Motor neuron (in vitro differentiated cells): ENCODE measurements at regions of chr4 and their contacts with region 1.

Region 1: DNA sequence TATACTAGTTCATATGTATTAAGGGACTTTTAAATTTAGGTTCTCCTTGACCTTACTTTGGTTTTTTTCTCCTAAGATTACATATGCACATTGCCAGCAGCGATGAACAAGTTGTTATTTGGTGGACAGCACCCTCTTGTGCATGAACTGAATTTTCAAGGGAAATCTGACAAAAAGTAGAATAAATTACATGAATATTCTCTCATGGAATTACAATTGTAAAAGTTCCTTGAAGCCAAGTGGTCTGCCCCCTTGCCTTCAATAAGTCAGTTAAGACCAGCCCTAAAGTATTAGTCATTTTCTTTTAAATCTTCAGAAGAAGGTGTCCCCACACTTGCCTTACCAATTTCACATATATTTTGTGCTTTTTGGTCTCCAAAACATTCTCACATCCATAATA is 30.7 kb upstream of the SMARCA5 start:
- ATAC-seq: peak in 3 of 8 experiments; percentile 64 to 82 (median 72)
- H3K4me3 ChIP-seq: no peak overlapping the region
- H3K27ac ChIP-seq: no peak overlapping the region
- H3K4me1 ChIP-seq: no peaks in the 10 kb centered on the region

Region 2: DNA sequence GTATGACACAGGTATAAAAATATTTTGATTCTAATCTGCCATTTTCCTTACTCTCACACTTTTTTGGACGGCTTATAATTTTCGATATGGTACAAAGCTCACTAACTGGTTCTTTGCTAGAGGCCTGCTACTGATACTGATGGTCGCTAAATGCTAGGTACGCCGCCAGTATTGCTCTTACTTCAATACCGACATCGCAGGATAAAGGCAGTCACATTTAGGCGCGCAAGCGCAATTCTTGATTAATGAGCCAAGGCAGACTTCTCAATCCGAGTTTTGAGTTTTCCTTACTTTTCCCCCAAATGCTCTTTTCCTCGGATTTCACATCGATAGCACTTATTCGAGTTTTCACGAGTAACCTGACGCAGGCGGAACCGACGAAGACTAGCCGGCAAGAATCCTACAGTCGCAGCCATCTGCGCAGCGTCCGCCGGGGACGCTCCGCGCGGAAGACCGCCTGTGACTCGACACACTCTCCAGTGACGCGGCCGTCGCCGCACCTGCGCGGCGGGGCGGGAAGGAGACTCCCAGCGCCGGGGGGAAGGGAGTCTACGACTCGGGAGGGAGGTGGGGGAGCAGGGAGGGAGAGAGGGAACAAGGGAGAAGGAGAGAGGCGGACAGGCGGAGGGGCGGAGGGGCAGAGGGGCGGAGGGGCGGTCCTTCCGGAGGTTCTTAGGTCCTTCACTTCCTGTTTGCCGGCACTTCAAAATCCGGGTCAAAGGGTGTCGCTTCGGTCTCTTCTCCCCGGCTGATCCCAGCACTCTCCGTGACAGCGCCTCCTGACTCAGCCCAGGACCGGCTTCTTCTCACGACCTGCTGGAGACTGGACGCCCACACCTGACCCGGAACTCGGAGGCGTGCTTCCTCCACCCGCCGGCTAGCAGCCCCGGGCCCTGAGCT is 298.4 kb before region 1 on chr4 and contains the start of gene USP38:
- in situ Hi-C with region 1: loop called in 1 of 9 experiments (anchors 25 kb)
- ATAC-seq: peak; percentile 86 to 93 (median 92)
- H3K4me3 ChIP-seq: peak within 1 kb of the TSS; percentile 76 to 92 (median 90)
- H3K27ac ChIP-seq: peak within 1 kb of the TSS; percentile 61 to 82
- H3K4me1 ChIP-seq: peaks cover 13 to 25% of the 10 kb centered on the region in 2 donors
- total RNA-seq, gene USP38: 13.0 to 20.5 (median 15.8) TPM

Region 3: GRCh38 chr4:143207557-143207956 is 275.3 kb before region 1 on chr4:
- in situ Hi-C with region 1: loop called in 4 of 9 experiments (anchors 10 to 25 kb)
- ATAC-seq: peak in 3 of 8 experiments; percentile 32 to 70 (median 33)
- H3K4me3 ChIP-seq: no peak overlapping the region
- H3K27ac ChIP-seq: no peak overlapping the region
- H3K4me1 ChIP-seq: no peaks in the 10 kb centered on the region

Region 4: DNA sequence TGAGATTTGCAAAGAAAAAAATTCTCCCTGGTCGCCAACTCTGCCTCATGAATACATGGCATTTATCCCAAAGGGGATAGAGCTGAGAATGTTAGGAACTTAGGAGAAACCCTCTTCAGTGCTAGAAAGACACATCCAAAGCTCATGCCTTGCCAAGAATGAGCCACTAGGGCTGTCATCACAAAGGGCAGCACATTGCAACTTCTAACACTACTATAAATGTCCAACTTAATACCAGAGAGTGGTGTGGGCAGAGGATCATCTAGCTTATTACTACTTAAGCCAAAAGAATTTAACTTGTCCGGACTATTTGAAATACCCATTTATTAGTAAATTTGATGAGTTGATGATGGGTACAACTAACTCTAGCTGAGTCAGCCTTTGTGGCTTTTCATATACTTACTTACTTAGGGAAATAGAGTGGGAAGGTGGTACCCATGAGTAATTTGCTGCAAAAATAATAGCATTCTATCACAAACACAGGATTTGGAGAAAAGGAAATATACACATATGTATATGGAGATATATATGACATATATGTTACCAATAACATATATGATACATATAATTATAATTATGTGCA is 212.5 kb before region 1 on chr4:
- in situ Hi-C with region 1: no loop called
- ATAC-seq: no peak
- H3K4me3 ChIP-seq: no peak overlapping the region
- H3K27ac ChIP-seq: no peak overlapping the region
- H3K4me1 ChIP-seq: no peaks in the 10 kb centered on the region